AG04450 (cell line): ENCODE measurements at regions of chr19 and their contacts with region 1.

Region 1: GRCh38 chr19:21851596-21852345 is 15.8 kb upstream of the ZNF43 start:
- DNase-seq: peak; percentile 87
- H3K4me3 ChIP-seq: peak overlapping the region; percentile 94
- H3K27ac ChIP-seq: peak overlapping the region; percentile 93
- H3K27me3 ChIP-seq: no peaks in the 10 kb centered on the region
- CTCF ChIP-seq: no peak

Region 2: DNA sequence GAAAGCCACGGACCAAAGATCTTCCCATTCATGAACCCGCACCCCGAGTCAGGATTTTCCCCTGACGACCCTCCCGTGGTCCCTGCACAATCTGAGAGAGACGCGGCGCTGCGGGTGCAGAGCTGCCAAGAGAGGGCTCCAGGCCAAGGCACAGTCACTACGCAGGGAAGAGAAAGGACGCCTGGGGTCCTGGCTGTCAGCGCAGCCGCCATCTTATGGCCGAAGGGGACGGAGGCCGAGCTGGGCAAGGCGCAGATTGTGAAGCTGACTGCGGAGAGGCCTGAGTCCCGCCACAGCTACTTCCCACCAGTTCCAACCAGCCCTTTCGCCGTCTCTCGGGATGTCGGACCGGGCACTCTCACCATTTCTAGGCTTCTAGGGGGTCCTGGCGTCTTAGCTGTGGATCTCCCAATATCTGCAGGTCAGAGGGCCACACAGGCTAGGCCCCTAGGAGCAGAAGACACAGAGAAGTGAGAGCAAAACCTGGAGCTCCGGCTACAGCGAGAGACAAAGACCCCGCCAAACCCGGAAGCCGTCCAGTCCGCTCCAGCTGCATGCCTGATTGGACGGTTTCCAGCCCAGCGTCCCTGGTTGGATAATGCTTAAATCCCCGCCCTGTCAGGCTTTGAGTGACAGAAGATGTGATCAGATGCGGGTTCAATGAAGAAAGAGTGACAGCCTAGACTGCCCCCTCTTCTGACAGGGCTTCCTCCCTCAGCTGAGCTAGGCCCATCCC is 84.5 kb before region 1 on chr19 and contains the start of gene ZNF100:
- CTCF ChIA-PET with region 1: interaction called, 11 read pairs
- POLR2A ChIA-PET with region 1: interaction called, 6 read pairs
- DNase-seq: peak; percentile 82
- H3K4me3 ChIP-seq: peak within 1 kb of the TSS; percentile 85
- H3K27ac ChIP-seq: peak within 1 kb of the TSS; percentile 77
- H3K27me3 ChIP-seq: no peaks in the 10 kb centered on the region
- CTCF ChIP-seq: no peak
- polyA plus RNA-seq, gene ZNF100: 2.3 and 3.0 TPM in 2 replicates

Region 3: GRCh38 chr19:21835810-21836444 is 15.8 kb before region 1 on chr19 and contains the start of gene ZNF43:
- CTCF ChIA-PET with region 1: interaction called, 4 read pairs
- POLR2A ChIA-PET with region 1: interaction called, 23 read pairs
- DNase-seq: peak; percentile 86
- H3K4me3 ChIP-seq: peak within 1 kb of the TSS; percentile 77
- H3K27ac ChIP-seq: peak within 1 kb of the TSS; percentile 97
- H3K27me3 ChIP-seq: no peaks in the 10 kb centered on the region
- CTCF ChIP-seq: no peak
- polyA plus RNA-seq, gene ZNF43: 4.1 and 6.3 TPM in 2 replicates